ENCODE measurements at regions of chrX and their contacts with region 1.

Region 1: GRCh38 chrX:65610040-65610439 is 57.4 kb upstream of the MSN start:
- DNase-seq: no peak
- ATAC-seq: peak in 1 of 4 experiments; percentile 44
- H3K4me3 ChIP-seq: no peak overlapping the region
- H3K4me3 Mint-ChIP-seq: peak overlapping the region in 1 of 3 donors; percentile 1
- H3K27ac ChIP-seq: no peak overlapping the region
- H3K27ac Mint-ChIP-seq: peak overlapping the region; percentile 61 to 73
- H3K4me1 ChIP-seq: peaks cover 4 to 25% of the 10 kb centered on the region in 2 experiments
- H3K4me1 Mint-ChIP-seq: peaks cover 43 to 54% (median 45%) of the 10 kb centered on the region in 3 donors
- H3K27me3 ChIP-seq: no peaks in the 10 kb centered on the region
- H3K27me3 Mint-ChIP-seq: peaks cover 0 to 6% of the 10 kb centered on the region in 2 donors

Region 2: GRCh38 chrX:65522739-65523372 is 87.2 kb before region 1 on chrX:
- CTCF ChIA-PET with region 1: no interaction called
- POLR2A ChIA-PET with region 1: no interaction called
- DNase-seq: no peak
- ATAC-seq: no peak
- H3K4me3 ChIP-seq: no peak overlapping the region
- H3K4me3 Mint-ChIP-seq: no peak overlapping the region
- H3K27ac ChIP-seq: no peak overlapping the region
- H3K27ac Mint-ChIP-seq: no peak overlapping the region
- H3K4me1 ChIP-seq: no peaks in the 10 kb centered on the region
- H3K4me1 Mint-ChIP-seq: no peaks in the 10 kb centered on the region
- H3K27me3 ChIP-seq: no peaks in the 10 kb centered on the region
- H3K27me3 Mint-ChIP-seq: peaks cover 0 to 8% of the 10 kb centered on the region in 2 donors

Region 3: GRCh38 chrX:65634732-65635131 is 24.7 kb after region 1 on chrX:
- CTCF ChIA-PET with region 1: no interaction called
- POLR2A ChIA-PET with region 1: no interaction called
- DNase-seq: no peak
- ATAC-seq: no peak
- H3K4me3 ChIP-seq: no peak overlapping the region
- H3K4me3 Mint-ChIP-seq: no peak overlapping the region
- H3K27ac ChIP-seq: no peak overlapping the region
- H3K27ac Mint-ChIP-seq: no peak overlapping the region
- H3K4me1 ChIP-seq: no peaks in the 10 kb centered on the region
- H3K4me1 Mint-ChIP-seq: peaks cover 2 to 17% (median 8%) of the 10 kb centered on the region in 3 donors
- H3K27me3 ChIP-seq: no peaks in the 10 kb centered on the region
- H3K27me3 Mint-ChIP-seq: peaks cover 0 to 8% of the 10 kb centered on the region in 2 donors

Region 4: DNA sequence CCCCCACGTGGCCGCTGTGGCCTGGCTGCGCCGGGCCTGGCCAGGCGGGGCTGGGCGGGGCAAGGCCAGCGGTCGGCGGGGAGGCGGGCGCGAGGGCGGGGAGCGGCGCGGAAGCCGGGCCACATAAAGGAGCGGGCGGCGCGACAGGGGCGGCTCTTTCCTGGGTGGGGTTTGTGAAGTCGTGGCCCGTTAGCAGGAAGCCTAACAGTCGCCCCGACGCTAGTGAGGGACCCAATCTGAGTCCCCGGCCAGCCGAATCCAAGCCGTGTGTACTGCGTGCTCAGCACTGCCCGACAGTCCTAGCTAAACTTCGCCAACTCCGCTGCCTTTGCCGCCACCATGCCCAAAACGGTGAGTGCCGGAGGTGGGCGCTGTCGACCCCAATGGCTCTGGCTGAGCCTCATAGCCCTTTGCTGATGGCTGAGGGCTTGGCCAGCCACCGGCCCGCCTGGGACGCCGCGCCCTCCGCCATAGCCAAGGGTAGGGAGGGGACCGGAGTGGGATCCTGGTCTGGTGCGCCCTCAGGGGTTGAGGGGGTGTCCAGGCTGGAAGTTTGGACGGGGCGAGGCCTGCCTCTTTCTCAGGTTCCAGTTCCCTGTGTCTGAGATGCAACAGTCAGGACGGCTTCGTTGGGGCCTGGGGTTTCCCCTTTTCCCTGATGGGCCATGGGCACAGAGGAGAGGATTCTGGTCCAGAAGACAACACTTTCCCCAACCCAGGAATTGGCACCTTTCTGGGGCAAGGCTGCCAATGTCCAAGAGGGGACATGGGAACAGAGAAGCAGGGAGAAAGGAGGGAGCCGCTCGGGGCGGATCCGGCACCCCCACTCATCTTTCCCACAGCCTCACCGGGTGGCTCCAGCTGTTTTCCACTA is 57.7 kb after region 1 on chrX and contains the start of gene MSN:
- CTCF ChIA-PET with region 1: interaction called in 1 of 2 experiments, 3 read pairs
- POLR2A ChIA-PET with region 1: interaction called in 1 of 2 experiments, 17 read pairs
- DNase-seq: peak; percentile 39 to 79 (median 64)
- ATAC-seq: peak; percentile 84 to 87 (median 86)
- H3K4me3 ChIP-seq: peak within 1 kb of the TSS; percentile 90 to 94
- H3K4me3 Mint-ChIP-seq: peak within 1 kb of the TSS; percentile 90 to 93 (median 93)
- H3K27ac ChIP-seq: peak within 1 kb of the TSS; percentile 78
- H3K27ac Mint-ChIP-seq: peak within 1 kb of the TSS; percentile 95 to 97
- H3K4me1 ChIP-seq: peaks cover 12 to 25% of the 10 kb centered on the region in 2 experiments
- H3K4me1 Mint-ChIP-seq: peaks cover 37 to 55% (median 49%) of the 10 kb centered on the region in 3 donors
- H3K27me3 ChIP-seq: no peaks in the 10 kb centered on the region
- H3K27me3 Mint-ChIP-seq: peaks cover 0 to 5% of the 10 kb centered on the region in 2 donors
- total RNA-seq, gene MSN: 324 to 383 (median 348) TPM

Measured in T-cell (primary cell).